ENCODE measurements at regions of chr14 and their contacts with region 1.

Region 1: GRCh38 chr14:63543000-63543825 is at the start of gene PPP2R5E:
- DNase-seq: peak; percentile 94
- ATAC-seq: peak; percentile 97
- H3K4me3 Mint-ChIP-seq: peak within 1 kb of the TSS; percentile 85
- H3K27ac Mint-ChIP-seq: peak within 1 kb of the TSS; percentile 94
- H3K4me1 Mint-ChIP-seq: peaks cover 25% of the 10 kb centered on the region
- H3K27me3 Mint-ChIP-seq: no peaks in the 10 kb centered on the region
- total RNA-seq, gene PPP2R5E: 46.5 to 48.4 TPM

Region 2: DNA sequence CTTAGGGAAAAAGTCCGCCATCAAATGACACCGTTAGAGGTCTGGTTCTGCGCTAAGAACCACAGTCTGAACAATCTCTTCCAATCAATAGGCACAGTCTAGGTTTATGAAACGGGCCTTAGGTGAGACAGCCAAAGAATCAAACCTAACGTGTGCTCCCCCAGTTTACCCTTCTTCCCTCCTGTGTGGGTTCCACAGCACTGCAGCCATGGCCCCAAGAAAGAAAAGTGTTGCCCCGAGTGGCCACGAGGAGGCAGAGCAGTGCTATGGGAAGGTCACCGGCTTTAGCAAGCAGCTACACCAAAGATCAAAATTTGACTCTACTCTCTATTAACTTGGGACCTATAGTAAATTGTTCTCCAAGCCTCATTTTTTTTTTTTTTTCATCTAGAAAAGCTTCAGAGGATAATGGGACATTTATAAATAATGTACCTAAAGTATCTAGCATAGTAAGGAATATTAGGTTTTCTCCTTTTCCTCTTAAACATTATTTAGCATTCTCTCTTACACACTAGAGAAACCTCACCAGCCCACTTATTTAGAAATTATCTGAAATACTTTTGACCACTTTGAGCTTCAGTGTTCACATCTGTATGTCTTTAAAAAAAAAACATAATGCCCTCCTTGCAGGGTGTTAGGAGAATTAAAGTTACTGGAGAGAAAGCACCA is 154.3 kb before region 1 on chr14:
- POLR2A ChIA-PET with region 1: interaction called, 10 read pairs
- DNase-seq: peak; percentile 68
- ATAC-seq: peak; percentile 78
- H3K4me3 Mint-ChIP-seq: no peak overlapping the region
- H3K27ac Mint-ChIP-seq: no peak overlapping the region
- H3K4me1 Mint-ChIP-seq: peaks cover 17% of the 10 kb centered on the region
- H3K27me3 Mint-ChIP-seq: no peaks in the 10 kb centered on the region

Region 3: GRCh38 chr14:63437953-63438757 is 105.1 kb before region 1 on chr14:
- POLR2A ChIA-PET with region 1: interaction called, 10 read pairs
- DNase-seq: peak; percentile 34
- ATAC-seq: peak; percentile 83
- H3K4me3 Mint-ChIP-seq: peak overlapping the region; percentile 77
- H3K27ac Mint-ChIP-seq: peak overlapping the region; percentile 75
- H3K4me1 Mint-ChIP-seq: peaks cover 46% of the 10 kb centered on the region
- H3K27me3 Mint-ChIP-seq: no peaks in the 10 kb centered on the region

Region 4: GRCh38 chr14:63510538-63510937 is 32.7 kb before region 1 on chr14:
- POLR2A ChIA-PET with region 1: interaction called, 11 read pairs
- DNase-seq: no peak
- ATAC-seq: peak; percentile 95
- H3K4me3 Mint-ChIP-seq: peak overlapping the region; percentile 79
- H3K27ac Mint-ChIP-seq: peak overlapping the region; percentile 90
- H3K4me1 Mint-ChIP-seq: peaks cover 39% of the 10 kb centered on the region
- H3K27me3 Mint-ChIP-seq: no peaks in the 10 kb centered on the region

Region 5: DNA sequence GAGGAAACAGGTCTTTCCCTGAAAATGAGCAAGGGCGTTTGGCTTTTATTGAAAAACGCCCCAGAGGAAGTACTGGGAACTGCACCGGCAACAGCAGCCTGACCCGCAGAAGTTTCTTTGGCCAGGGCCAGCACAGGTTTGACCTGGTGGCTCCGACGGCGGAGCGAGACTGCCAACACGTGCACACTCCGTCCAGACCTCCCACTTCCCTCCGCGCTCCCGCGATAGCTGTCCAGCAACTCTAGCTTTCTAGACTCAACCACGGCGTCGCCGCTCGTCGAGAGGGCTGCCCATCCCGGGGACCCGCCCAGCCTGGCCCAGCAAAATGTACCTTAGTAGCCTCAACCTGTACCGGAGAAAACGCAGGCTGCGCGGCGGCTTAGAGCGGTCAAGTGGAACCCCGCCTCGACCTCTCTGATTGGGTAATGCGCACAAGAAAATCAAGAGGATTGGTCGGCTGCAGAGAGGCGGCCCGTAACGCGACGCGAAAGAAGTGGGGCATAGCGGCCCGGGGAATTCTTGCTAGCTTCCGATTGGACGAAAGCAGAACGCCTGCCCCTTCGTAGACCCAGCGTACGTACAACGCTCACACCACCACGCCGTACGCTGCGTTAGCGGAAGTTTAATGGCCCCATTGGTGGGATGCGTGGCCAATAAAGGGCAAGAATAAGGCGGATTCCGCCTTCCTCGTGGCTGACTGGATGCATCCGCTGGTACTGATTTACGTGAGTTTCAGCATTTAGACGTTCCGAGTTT is 98.4 kb after region 1 on chr14 and contains the start of gene WDR89:
- POLR2A ChIA-PET with region 1: interaction called, 16 read pairs
- DNase-seq: peak; percentile 88
- ATAC-seq: peak; percentile 93
- H3K4me3 Mint-ChIP-seq: peak within 1 kb of the TSS; percentile 93
- H3K27ac Mint-ChIP-seq: peak within 1 kb of the TSS; percentile 92
- H3K4me1 Mint-ChIP-seq: peaks cover 26% of the 10 kb centered on the region
- H3K27me3 Mint-ChIP-seq: no peaks in the 10 kb centered on the region
- total RNA-seq, gene WDR89: 22.7 to 23.1 TPM

Measured in activated naive CD8-positive, alpha-beta T cell treated with anti-CD3 and anti-CD28 coated beads, Interleukin-2, amount 10 ng/mL, durations not matched to agents 7 days and 5 days (primary cell).